ENCODE measurements at regions of chr4 and their contacts with region 1.

Region 1: GRCh38 chr4:1346781-1347409 is at the start of gene UVSSA:
- DNase-seq: peak; percentile 100
- ATAC-seq: peak; percentile 93
- H3K4me3 Mint-ChIP-seq: peak within 1 kb of the TSS; percentile 86
- H3K27ac Mint-ChIP-seq: peak within 1 kb of the TSS; percentile 91
- H3K4me1 Mint-ChIP-seq: peaks cover 27% of the 10 kb centered on the region
- H3K27me3 Mint-ChIP-seq: no peaks in the 10 kb centered on the region
- CTCF ChIP-seq: no peak
- total RNA-seq, gene UVSSA: 36.9 to 41.5 TPM (median 40.4 TPM) in 3 replicates

Region 2: DNA sequence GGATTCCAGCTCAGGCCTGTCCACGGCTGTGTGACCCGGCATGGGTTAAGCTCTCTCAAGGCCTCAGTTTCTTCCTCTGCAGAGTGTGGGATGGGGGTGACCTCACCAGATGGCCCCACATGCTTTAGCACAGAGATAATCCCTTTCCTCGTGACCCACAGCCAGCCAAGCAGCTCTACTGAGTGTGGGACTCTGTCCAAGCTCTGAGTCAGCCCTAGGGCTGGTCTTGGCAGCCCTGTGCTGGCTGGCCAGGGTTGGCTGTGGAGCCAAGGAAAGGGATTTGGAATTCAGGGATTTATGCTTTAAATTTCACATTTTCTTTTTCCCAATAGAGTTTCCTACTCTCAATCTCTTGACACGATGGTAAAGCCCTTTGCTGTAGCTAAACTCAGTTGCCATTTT is 154.8 kb before region 1 on chr4:
- CTCF ChIA-PET with region 1: no interaction called
- POLR2A ChIA-PET with region 1: no interaction called
- DNase-seq: no peak
- ATAC-seq: no peak
- H3K4me3 Mint-ChIP-seq: no peak overlapping the region
- H3K27ac Mint-ChIP-seq: no peak overlapping the region
- H3K4me1 Mint-ChIP-seq: no peaks in the 10 kb centered on the region
- H3K27me3 Mint-ChIP-seq: peaks cover 4% of the 10 kb centered on the region; the same call in 1 of the 2 replicates
- CTCF ChIP-seq: no peak

Region 3: GRCh38 chr4:1318488-1319213 is 28.2 kb before region 1 on chr4:
- CTCF ChIA-PET with region 1: interaction called, 10 read pairs
- POLR2A ChIA-PET with region 1: no interaction called
- DNase-seq: peak; percentile 71
- ATAC-seq: peak; percentile 71
- H3K4me3 Mint-ChIP-seq: no peak overlapping the region
- H3K27ac Mint-ChIP-seq: no peak overlapping the region
- H3K4me1 Mint-ChIP-seq: no peaks in the 10 kb centered on the region
- H3K27me3 Mint-ChIP-seq: no peaks in the 10 kb centered on the region
- CTCF ChIP-seq: peak; percentile 52; the same call in 1 of the 2 replicates

Region 4: GRCh38 chr4:1533401-1534064 is 186.6 kb after region 1 on chr4:
- CTCF ChIA-PET with region 1: no interaction called
- POLR2A ChIA-PET with region 1: no interaction called
- DNase-seq: no peak
- ATAC-seq: no peak
- H3K4me3 Mint-ChIP-seq: no peak overlapping the region
- H3K27ac Mint-ChIP-seq: no peak overlapping the region
- H3K4me1 Mint-ChIP-seq: no peaks in the 10 kb centered on the region
- H3K27me3 Mint-ChIP-seq: no peaks in the 10 kb centered on the region
- CTCF ChIP-seq: no peak

Region 5: GRCh38 chr4:1572521-1572920 is 225.6 kb after region 1 on chr4:
- CTCF ChIA-PET with region 1: no interaction called
- POLR2A ChIA-PET with region 1: no interaction called
- DNase-seq: peak; percentile 75
- ATAC-seq: peak; percentile 82
- H3K4me3 Mint-ChIP-seq: peak overlapping the region; percentile 33
- H3K27ac Mint-ChIP-seq: peak overlapping the region; percentile 47; the same call in 1 of the 2 replicates
- H3K4me1 Mint-ChIP-seq: peaks cover 45% of the 10 kb centered on the region
- H3K27me3 Mint-ChIP-seq: peaks cover 9% of the 10 kb centered on the region
- CTCF ChIP-seq: no peak